CD4-positive, alpha-beta T cell (primary cell): ENCODE measurements at regions of chr6 and their contacts with region 1.

Region 1: DNA sequence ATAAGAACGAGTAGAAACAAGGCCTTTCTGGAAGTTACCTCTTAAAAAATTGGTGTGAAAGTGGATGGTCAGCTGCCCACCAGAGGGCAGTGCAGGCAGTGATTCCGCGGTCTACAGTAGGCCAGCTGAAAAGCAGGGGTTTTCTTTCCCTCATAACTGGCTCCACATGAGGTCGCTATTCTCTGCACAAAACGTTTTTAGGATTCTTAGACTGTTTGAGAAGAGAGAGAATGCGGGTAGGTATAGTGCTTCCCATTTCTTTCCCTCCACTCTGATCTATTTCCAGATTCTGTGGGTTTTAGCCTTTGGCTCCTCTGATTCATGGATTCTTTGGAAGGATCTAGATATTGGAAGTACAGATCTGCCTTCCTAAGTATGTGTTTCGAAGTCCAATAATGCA is 14.2 kb downstream of the FIG4 start:
- DNase-seq: peak; percentile 51 to 88 (median 66)
- ATAC-seq: peak; percentile 97
- H3K4me3 ChIP-seq: no peak overlapping the region
- H3K4me3 Mint-ChIP-seq: no peak overlapping the region
- H3K27ac ChIP-seq: no peak overlapping the region
- H3K27ac Mint-ChIP-seq: no peak overlapping the region
- H3K4me1 ChIP-seq: no peaks in the 10 kb centered on the region
- H3K4me1 Mint-ChIP-seq: peaks cover 40% of the 10 kb centered on the region
- H3K27me3 ChIP-seq: no peaks in the 10 kb centered on the region
- H3K27me3 Mint-ChIP-seq: no peaks in the 10 kb centered on the region
- CTCF ChIP-seq: peak; percentile 91

Region 2: GRCh38 chr6:109526905-109527628 is 178.2 kb before region 1 on chr6:
- CTCF ChIA-PET with region 1: no interaction called
- POLR2A ChIA-PET with region 1: no interaction called
- intact Hi-C with region 1: loop called in 1 of 2 experiments (anchors 1 kb)
- DNase-seq: peak in 13 of 14 experiments; percentile 9 to 78 (median 32)
- ATAC-seq: peak; percentile 61
- H3K4me3 ChIP-seq: no peak overlapping the region
- H3K4me3 Mint-ChIP-seq: no peak overlapping the region
- H3K27ac ChIP-seq: no peak overlapping the region
- H3K27ac Mint-ChIP-seq: no peak overlapping the region
- H3K4me1 ChIP-seq: peaks cover 4% of the 10 kb centered on the region
- H3K4me1 Mint-ChIP-seq: no peaks in the 10 kb centered on the region
- H3K27me3 ChIP-seq: no peaks in the 10 kb centered on the region
- H3K27me3 Mint-ChIP-seq: no peaks in the 10 kb centered on the region
- CTCF ChIP-seq: peak; percentile 75

Region 3: DNA sequence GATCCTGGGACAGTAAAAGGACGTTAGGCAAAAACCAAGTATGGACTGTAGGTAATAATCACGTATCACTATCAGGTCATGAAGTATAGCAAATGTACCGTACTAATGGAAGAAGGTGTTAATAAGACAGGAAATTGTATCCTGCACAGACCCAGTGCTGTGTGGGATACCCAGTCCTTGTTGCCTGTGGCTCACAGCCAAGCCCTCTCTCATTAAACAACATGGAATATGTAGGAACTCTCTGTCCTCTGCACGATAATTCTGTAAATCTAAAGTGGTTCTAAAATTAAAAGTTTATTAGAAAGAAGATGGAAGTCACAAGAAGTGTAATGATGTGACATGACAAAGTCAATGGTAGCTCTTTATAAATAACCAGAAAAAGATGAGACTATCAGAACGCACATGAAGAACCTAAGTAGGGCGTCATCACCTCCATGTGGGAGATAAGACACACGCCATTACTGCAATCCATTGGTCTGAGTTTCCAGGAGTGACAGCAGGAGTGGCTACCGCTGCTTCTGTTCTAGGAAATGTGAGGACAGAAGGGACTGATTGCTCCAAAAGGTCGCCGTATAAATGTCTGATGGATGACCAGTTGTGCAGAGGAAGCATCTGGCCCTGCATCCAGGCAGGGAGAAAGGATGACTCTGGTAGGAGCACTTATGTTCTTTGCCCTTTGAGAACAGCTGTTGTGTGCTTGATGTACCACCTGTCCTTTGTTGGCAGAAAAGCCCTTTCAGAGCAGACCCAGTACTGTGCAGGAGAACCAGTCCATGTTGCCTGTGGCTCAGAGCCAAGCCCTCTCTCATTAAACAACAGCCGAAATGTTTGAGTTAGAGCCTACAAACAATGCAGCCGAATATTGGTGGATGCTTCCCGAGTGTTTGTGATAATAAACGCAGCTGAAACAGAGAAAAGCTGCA is 111.5 kb after region 1 on chr6:
- CTCF ChIA-PET with region 1: no interaction called
- POLR2A ChIA-PET with region 1: no interaction called
- intact Hi-C with region 1: no loop called
- DNase-seq: no peak
- ATAC-seq: no peak
- H3K4me3 ChIP-seq: no peak overlapping the region
- H3K4me3 Mint-ChIP-seq: no peak overlapping the region
- H3K27ac ChIP-seq: no peak overlapping the region
- H3K27ac Mint-ChIP-seq: no peak overlapping the region
- H3K4me1 ChIP-seq: no peaks in the 10 kb centered on the region
- H3K4me1 Mint-ChIP-seq: no peaks in the 10 kb centered on the region
- H3K27me3 ChIP-seq: no peaks in the 10 kb centered on the region
- H3K27me3 Mint-ChIP-seq: no peaks in the 10 kb centered on the region
- CTCF ChIP-seq: no peak

Region 4: GRCh38 chr6:110389689-110390382 is 684.6 kb after region 1 on chr6:
- CTCF ChIA-PET with region 1: interaction called, 17 read pairs
- POLR2A ChIA-PET with region 1: no interaction called
- intact Hi-C with region 1: loop called (anchors 1 to 2 kb)
- DNase-seq: no peak
- ATAC-seq: peak; percentile 23
- H3K4me3 ChIP-seq: no peak overlapping the region
- H3K4me3 Mint-ChIP-seq: no peak overlapping the region
- H3K27ac ChIP-seq: no peak overlapping the region
- H3K27ac Mint-ChIP-seq: peak overlapping the region; percentile 75
- H3K4me1 ChIP-seq: peaks cover 5% of the 10 kb centered on the region
- H3K4me1 Mint-ChIP-seq: peaks cover 27% of the 10 kb centered on the region
- H3K27me3 ChIP-seq: no peaks in the 10 kb centered on the region
- H3K27me3 Mint-ChIP-seq: no peaks in the 10 kb centered on the region
- CTCF ChIP-seq: no peak

Region 5: GRCh38 chr6:110981202-110981600 is 1275.9 kb after region 1 on chr6:
- CTCF ChIA-PET with region 1: no interaction called
- POLR2A ChIA-PET with region 1: no interaction called
- intact Hi-C with region 1: loop called in 1 of 2 experiments (anchors 10 kb)
- DNase-seq: peak in 1 of 14 experiments; percentile 43
- ATAC-seq: peak; percentile 1
- H3K4me3 ChIP-seq: peak overlapping the region; percentile 99
- H3K4me3 Mint-ChIP-seq: peak overlapping the region; percentile 99
- H3K27ac ChIP-seq: peak overlapping the region; percentile 77 to 97
- H3K27ac Mint-ChIP-seq: peak overlapping the region; percentile 99
- H3K4me1 ChIP-seq: peaks cover 14% of the 10 kb centered on the region
- H3K4me1 Mint-ChIP-seq: peaks cover 49% of the 10 kb centered on the region
- H3K27me3 ChIP-seq: no peaks in the 10 kb centered on the region
- H3K27me3 Mint-ChIP-seq: no peaks in the 10 kb centered on the region
- CTCF ChIP-seq: no peak